ENCODE measurements at regions of chr2 and their contacts with region 1.

Region 1: DNA sequence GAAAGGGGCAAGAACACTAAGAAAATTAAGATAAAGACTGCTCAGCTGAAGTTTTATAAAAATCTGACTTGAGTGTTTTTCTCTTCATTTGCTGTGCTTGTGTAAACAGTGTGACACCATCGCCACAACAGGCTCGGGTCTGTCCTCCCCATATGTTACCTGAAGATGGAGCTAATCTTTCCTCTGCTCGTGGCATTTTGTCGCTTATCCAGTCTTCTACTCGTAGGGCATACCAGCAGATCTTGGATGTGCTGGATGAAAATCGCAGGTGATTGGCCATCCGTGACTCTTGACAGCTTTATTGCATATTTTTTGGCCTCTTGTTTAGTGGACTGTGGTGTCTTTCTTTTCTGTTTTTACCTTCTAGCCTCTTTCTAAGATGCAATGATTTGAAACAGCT is 22.1 kb downstream of the MFF start:
- DNase-seq: no peak
- ATAC-seq: peak; percentile 47; the same call in 1 of the 2 replicates
- H3K4me3 ChIP-seq: no peak overlapping the region
- H3K27ac ChIP-seq: no peak overlapping the region
- H3K4me1 ChIP-seq: no peaks in the 10 kb centered on the region
- H3K27me3 ChIP-seq: no peaks in the 10 kb centered on the region
- CTCF ChIP-seq: 0 out of 6 replicates have a peak, but pooled peaks of 1 of the 3 experiments have one; percentile 3
- POLR2A ChIP-seq: no peak
- RAD21 ChIP-seq: no peak

Region 2: DNA sequence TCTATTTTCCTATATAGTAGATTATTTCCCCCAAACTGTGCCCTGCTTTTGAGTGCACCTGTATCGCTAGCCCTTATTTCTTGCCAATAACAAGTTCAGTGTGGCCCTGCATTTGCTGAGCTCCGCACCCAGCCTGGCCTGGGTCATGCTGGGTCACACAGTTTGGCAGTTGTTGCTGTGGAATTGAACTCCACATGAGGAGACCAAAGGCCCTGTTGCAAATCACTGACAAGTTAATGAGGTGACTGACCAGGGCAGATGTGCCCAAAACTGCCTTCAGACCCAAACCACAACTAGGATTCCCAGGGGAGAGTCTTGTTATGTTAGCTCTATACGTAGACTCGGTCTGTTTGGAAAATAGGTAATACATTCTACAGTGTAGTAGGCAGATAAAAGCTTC is 214.1 kb before region 1 on chr2:
- CTCF ChIA-PET with region 1: no interaction called
- POLR2A ChIA-PET with region 1: no interaction called
- RAD21 ChIA-PET with region 1: no interaction called
- intact Hi-C with region 1: loop called (anchors 10 kb)
- DNase-seq: no peak
- ATAC-seq: no peak
- H3K4me3 ChIP-seq: no peak overlapping the region
- H3K27ac ChIP-seq: no peak overlapping the region
- H3K4me1 ChIP-seq: no peaks in the 10 kb centered on the region
- H3K27me3 ChIP-seq: no peaks in the 10 kb centered on the region
- CTCF ChIP-seq: no peak
- POLR2A ChIP-seq: no peak
- RAD21 ChIP-seq: no peak